Activated CD8-positive, alpha-beta T cell treated with anti-CD3 and anti-CD28 coated beads for 36 hours (primary cell): ENCODE measurements at regions of chr4 and their contacts with region 1.

Region 1: DNA sequence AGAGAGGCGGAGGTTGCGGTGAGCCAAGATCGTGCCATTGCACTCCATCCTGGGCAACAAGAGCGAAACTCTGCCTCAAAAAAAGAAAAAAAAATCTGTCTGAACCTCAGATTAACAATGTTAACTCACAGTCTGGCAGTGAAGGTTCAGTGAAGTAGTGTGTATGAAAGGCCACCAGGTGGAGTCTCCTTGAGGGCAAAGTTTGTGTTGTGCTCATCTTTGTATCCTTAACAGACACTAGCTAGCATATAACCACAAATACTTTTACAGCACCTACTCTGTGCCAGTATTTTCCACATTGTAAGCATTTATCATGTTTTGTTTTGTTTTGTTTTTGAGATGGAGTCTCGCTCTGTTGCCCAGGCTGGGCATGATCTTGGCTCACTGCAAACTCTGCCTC is 46.0 kb upstream of the MGST2 start:
- DNase-seq: no peak
- ATAC-seq: peak; percentile 69
- H3K4me3 Mint-ChIP-seq: no peak overlapping the region
- H3K27ac Mint-ChIP-seq: no peak overlapping the region
- H3K4me1 Mint-ChIP-seq: no peaks in the 10 kb centered on the region
- H3K27me3 Mint-ChIP-seq: no peaks in the 10 kb centered on the region
- CTCF ChIP-seq: peak; percentile 55

Region 2: DNA sequence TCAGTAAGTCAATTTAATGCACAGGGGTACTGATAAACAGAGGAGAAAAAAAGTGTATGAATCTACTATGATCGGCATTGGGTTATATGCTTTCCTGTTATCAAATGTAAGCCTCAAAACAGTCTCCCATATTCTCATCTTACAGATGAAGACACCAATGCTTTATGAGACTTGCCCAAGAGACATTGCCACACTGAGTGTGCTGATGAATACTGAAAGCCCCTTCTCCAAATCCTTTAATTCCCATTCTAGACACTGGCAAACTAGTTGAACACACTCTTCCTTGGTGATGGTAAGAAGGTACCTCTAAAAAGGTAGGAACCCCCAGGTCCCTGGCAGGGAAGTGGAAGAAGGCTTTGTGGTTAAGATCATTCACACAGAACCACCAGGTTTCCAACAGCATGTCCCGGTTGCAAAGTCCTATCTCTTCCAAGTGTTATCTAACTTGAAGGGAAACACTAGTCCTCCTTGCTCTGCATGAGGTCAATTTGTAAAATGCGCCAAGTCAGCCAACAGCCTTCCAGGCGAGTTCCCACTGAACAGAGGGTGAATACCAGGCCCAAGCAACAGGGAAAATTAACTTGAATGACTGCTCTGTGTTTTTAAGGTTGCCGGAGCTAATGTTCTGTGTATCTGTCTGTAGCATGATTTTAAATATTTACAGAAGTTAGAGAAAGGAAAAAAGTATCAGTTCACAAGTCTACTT is 68.8 kb before region 1 on chr4:
- CTCF ChIA-PET with region 1: no interaction called
- POLR2A ChIA-PET with region 1: no interaction called
- intact Hi-C with region 1: no loop called
- DNase-seq: no peak
- ATAC-seq: no peak
- H3K4me3 Mint-ChIP-seq: no peak overlapping the region
- H3K27ac Mint-ChIP-seq: no peak overlapping the region
- H3K4me1 Mint-ChIP-seq: peaks cover 20% of the 10 kb centered on the region
- H3K27me3 Mint-ChIP-seq: peaks cover 3% of the 10 kb centered on the region
- CTCF ChIP-seq: no peak

Region 3: DNA sequence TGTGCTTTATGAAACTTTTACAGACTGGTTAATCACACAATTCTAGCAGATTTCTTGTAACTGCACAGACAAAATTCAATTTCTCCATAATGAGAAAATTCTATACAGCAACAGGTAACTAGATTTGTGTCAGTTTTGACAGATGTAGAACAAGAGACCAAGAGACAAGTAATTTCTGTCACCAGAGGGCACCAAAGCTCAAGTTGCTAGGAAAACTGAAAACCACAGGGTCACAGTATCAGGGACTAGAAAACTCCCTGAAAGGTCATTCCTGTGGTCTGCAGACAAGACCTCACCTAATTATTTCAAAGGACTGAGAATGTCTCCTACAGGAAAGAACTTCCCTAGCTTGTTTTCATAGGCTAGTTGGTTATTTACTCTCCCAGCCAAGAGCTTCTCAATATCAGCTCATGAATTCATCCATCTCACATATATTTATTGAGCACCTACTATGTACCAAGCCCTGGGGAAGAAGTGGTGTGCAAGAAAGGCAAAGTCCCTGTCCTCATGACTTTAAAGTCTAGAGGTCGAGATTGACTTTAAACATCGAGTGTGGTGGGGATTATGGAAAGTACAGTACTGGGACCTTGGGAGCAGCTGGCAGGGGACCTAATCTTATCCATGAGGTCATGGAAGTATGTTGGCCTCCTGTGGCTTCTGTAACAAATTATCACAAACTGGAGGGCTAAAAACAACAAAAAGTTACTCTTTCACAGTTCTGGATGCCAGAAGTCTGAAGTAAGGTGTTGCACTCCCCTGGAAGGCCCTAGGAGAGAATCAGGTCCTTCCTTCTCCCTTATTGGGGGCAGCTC is 15.9 kb before region 1 on chr4:
- CTCF ChIA-PET with region 1: interaction called, 13 read pairs
- POLR2A ChIA-PET with region 1: no interaction called
- intact Hi-C with region 1: no loop called
- DNase-seq: peak; percentile 44
- ATAC-seq: peak; percentile 29
- H3K4me3 Mint-ChIP-seq: no peak overlapping the region
- H3K27ac Mint-ChIP-seq: no peak overlapping the region
- H3K4me1 Mint-ChIP-seq: peaks cover 10% of the 10 kb centered on the region
- H3K27me3 Mint-ChIP-seq: no peaks in the 10 kb centered on the region
- CTCF ChIP-seq: peak; percentile 75